Panc1 (cell line): ENCODE measurements at regions of chr2 and their contacts with region 1.

Region 1: DNA sequence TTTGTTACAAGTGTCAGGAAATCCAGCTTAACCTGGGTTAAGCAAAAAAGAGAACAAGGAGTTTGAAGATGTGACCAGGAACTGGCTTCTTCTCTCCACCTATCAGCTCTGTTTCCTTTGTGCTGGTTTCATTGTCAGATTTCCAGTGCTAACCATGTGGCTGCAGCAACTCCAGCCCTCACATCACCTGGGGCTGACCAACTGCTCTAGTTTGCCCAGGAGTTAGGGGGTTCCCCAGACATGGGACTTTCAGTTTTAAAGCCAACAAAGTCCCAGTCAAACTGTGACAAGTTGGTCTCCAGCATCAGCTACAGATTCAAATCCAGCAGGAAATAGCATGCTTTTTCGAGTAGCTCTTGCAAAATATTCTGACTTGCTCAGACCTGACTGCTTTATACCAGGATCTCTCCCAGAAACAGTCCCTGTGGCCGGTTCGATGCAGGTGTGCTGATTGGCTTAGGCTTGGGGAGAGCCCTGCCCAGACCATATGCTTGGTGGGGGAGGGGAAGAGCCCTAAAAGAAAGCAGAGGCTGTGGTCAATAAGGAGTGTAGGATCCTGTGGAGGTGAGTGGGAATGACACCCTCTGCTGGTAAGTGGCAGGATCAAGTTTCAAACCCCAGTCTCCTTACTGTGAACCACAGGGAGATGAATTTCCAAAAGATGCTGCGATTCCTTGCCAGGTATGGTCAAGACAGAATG is 49.5 kb downstream of the KCNE4 start:
- DNase-seq: peak; percentile 10
- ATAC-seq: peak; percentile 84
- H3K4me3 ChIP-seq: no peak overlapping the region
- H3K27ac ChIP-seq: no peak overlapping the region
- H3K4me1 ChIP-seq: no peaks in the 10 kb centered on the region
- H3K27me3 ChIP-seq: no peaks in the 10 kb centered on the region
- CTCF ChIP-seq: peak; percentile 76

Region 2: DNA sequence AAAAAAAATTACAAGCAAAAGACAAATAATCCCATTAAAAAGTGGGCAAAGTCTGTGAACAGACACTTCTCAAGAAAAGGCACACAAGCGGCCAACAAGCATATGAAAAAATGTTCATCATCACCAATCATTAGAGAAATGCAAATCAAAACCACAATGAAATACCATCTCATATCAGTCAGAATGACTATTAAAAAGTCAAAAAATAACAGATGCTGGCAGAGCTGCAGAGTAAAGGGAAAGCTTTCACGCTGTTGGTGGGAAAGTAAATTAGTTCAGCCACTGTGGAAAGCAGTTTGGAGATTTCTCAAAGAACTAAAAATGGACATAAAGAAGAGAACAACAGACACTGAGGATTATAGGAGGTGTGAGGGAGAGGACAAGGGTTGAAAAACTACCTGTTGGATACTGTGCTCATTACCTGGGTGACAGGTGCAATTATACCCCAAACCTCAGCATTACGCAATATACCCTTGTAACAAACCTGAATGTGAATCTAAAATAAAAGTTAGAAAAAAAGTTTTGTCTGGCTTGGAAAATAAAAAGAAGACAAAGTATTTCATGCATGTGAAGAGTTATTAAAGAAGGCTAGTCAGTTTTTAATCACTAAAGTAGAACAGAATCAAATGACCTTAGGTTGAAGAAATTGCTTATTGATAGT is 249.4 kb before region 1 on chr2:
- CTCF ChIA-PET with region 1: no interaction called
- POLR2A ChIA-PET with region 1: no interaction called
- in situ Hi-C with region 1: no loop called
- intact Hi-C with region 1: no loop called
- DNase-seq: no peak
- ATAC-seq: no peak
- H3K4me3 ChIP-seq: no peak overlapping the region
- H3K27ac ChIP-seq: no peak overlapping the region
- H3K4me1 ChIP-seq: no peaks in the 10 kb centered on the region
- H3K27me3 ChIP-seq: no peaks in the 10 kb centered on the region
- CTCF ChIP-seq: no peak

Region 3: DNA sequence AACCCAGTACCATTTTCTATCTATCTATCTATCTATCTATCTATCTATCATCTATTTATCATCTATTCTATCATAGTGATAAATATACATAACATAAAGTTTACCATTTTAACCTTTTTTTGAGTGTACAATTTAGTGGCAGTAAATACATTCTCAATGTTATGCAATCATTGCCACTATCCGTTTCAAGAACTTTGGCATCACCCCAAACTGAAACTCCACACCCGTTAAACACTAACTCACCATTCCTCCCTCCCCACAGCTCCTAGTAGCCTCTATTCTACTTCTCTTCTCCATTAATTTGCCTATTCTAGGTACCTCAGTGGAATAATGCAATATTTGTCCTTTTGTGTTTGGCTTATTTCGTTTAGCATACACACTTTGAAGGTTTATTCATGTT is 132.0 kb before region 1 on chr2:
- CTCF ChIA-PET with region 1: no interaction called
- POLR2A ChIA-PET with region 1: no interaction called
- in situ Hi-C with region 1: no loop called
- intact Hi-C with region 1: loop called (anchors 2 kb)
- DNase-seq: no peak
- ATAC-seq: no peak
- H3K4me3 ChIP-seq: no peak overlapping the region
- H3K27ac ChIP-seq: no peak overlapping the region
- H3K4me1 ChIP-seq: no peaks in the 10 kb centered on the region
- H3K27me3 ChIP-seq: no peaks in the 10 kb centered on the region
- CTCF ChIP-seq: no peak